Activated B cell treated with CpG ODN at 0.5 μM for 24 hours (primary cell): ENCODE measurements at regions of chr2 and their contacts with region 1.

Region 1: DNA sequence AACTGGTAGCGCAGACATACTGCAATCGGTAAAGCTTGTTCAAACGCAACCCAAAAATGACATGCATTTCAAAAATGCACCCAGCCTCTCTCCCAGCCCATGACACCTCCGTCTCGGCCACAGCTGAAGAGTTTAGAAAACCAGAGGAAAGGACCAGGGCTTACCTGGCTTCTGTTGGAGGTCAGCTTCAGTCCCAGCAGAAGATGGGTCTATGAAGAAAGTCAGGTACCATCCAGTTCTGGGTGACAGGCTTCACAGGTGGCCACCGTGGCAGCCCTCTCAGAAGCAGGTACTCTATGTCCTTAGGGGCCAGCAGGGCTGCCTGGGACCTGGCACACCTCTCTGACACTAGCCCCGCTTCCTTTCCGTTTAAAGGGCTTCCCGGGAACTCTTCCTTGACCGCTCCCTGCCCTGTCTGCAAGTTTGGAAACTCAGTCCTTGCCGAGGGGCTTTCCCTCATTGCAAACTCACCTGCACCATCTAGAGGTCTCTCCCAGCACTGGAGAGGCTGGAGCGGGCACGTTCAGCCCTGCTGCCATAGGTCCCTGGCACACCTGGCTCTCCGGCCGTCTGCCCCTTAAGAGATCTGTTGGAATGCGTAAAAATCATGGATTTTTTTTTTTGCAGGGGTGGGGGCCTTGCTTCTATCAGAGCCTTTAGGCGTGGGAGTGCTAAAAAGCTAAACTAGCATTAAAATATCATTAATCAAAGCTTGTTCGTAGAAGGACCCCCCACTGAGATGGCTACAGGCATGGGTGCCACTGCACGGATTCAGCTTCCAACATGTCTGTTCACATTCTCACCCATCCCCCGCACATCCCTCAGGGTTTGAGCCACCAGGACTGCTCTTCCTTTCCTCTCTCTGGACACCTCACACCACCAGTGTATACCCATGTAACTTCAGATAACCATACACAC is at the start of gene EDAR:
- DNase-seq: no peak
- ATAC-seq: no peak
- H3K4me3 Mint-ChIP-seq: no peak within 1 kb of the TSS
- H3K27ac Mint-ChIP-seq: no peak within 1 kb of the TSS
- H3K4me1 Mint-ChIP-seq: no peaks in the 10 kb centered on the region
- H3K27me3 Mint-ChIP-seq: peaks cover 11% of the 10 kb centered on the region
- CTCF ChIP-seq: no peak
- total RNA-seq, gene EDAR: not detected in 2 replicates

Region 2: DNA sequence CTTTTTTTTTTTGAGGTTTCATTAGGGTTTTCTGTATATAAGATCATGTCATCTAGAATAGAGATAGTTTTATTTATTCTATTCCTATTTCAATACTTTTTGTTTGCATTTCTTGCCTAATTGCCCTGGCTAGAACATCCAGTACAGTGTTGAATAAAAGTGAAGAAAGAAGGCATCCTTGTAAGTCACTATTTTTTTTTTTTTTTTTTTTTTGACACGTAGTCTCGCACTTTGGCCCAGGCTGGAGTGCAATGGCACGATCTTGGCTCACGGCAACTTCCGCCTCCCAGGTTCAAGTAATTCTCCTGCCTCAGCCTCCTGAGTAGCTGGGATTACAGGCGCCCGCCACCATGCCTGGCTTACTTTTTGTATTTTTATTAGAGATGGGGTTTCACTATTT is 297.6 kb before region 1 on chr2:
- CTCF ChIA-PET with region 1: no interaction called
- POLR2A ChIA-PET with region 1: no interaction called
- intact Hi-C with region 1: loop called (anchors 10 kb)
- DNase-seq: no peak
- ATAC-seq: no peak
- H3K4me3 Mint-ChIP-seq: no peak overlapping the region
- H3K27ac Mint-ChIP-seq: no peak overlapping the region
- H3K4me1 Mint-ChIP-seq: no peaks in the 10 kb centered on the region
- H3K27me3 Mint-ChIP-seq: no peaks in the 10 kb centered on the region
- CTCF ChIP-seq: no peak